MCF 10A (cell line): ENCODE measurements at regions of chr12 and their contacts with region 1.

Region 1: GRCh38 chr12:104064031-104064822 is at the start of gene HCFC2:
- DNase-seq: peak; percentile 82
- H3K4me3 Mint-ChIP-seq: peak within 1 kb of the TSS; percentile 91
- H3K27ac Mint-ChIP-seq: peak within 1 kb of the TSS; percentile 75
- H3K4me1 Mint-ChIP-seq: peaks cover 15% of the 10 kb centered on the region
- H3K27me3 Mint-ChIP-seq: no peaks in the 10 kb centered on the region
- CTCF ChIP-seq: no peak
- total RNA-seq, gene HCFC2: 10.3 and 11.4 TPM in 2 replicates

Region 2: DNA sequence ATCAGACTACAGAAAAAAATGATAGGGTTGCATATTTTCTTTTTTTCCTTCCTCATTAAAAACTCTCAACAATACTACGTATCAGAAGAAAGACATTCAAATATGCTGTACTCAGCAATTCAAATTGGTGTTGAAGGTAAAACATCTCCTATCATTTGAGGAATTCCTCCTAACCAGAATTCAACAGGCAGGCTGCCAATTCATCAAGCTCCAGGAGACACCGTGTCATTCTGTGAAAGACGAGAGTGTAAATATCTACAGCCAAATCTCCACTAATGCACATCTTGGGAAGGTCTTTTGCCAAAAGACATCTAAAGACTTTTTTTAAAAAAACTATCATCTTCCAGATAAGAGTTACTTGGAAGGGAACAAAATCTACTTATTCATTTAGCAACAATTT is 249.8 kb before region 1 on chr12:
- CTCF ChIA-PET with region 1: no interaction called
- POLR2A ChIA-PET with region 1: no interaction called
- intact Hi-C with region 1: no loop called
- DNase-seq: no peak
- H3K4me3 Mint-ChIP-seq: no peak overlapping the region
- H3K27ac Mint-ChIP-seq: peak overlapping the region; percentile 73
- H3K4me1 Mint-ChIP-seq: no peaks in the 10 kb centered on the region
- H3K27me3 Mint-ChIP-seq: no peaks in the 10 kb centered on the region
- CTCF ChIP-seq: no peak

Region 3: GRCh38 chr12:103930034-103930786 is 134.0 kb before region 1 on chr12 and contains the start of gene HSP90B1:
- CTCF ChIA-PET with region 1: no interaction called
- POLR2A ChIA-PET with region 1: interaction called, 16 read pairs
- intact Hi-C with region 1: loop called (anchors 1 kb)
- DNase-seq: peak; percentile 100
- H3K4me3 Mint-ChIP-seq: peak within 1 kb of the TSS; percentile 75
- H3K27ac Mint-ChIP-seq: peak within 1 kb of the TSS; percentile 58
- H3K4me1 Mint-ChIP-seq: peaks cover 23% of the 10 kb centered on the region
- H3K27me3 Mint-ChIP-seq: no peaks in the 10 kb centered on the region
- CTCF ChIP-seq: no peak
- total RNA-seq, gene HSP90B1: 1,052 and 1,334 TPM in 2 replicates

Region 4: GRCh38 chr12:104011261-104011660 is 53.0 kb before region 1 on chr12:
- CTCF ChIA-PET with region 1: no interaction called
- POLR2A ChIA-PET with region 1: interaction called, 10 read pairs
- intact Hi-C with region 1: no loop called
- DNase-seq: peak; percentile 95
- H3K4me3 Mint-ChIP-seq: peak overlapping the region; percentile 9
- H3K27ac Mint-ChIP-seq: peak overlapping the region; percentile 85
- H3K4me1 Mint-ChIP-seq: peaks cover 25% of the 10 kb centered on the region
- H3K27me3 Mint-ChIP-seq: no peaks in the 10 kb centered on the region
- CTCF ChIP-seq: no peak

Region 5: GRCh38 chr12:104152685-104153241 is 88.5 kb after region 1 on chr12:
- CTCF ChIA-PET with region 1: no interaction called
- POLR2A ChIA-PET with region 1: no interaction called
- intact Hi-C with region 1: no loop called
- DNase-seq: no peak
- H3K4me3 Mint-ChIP-seq: no peak overlapping the region
- H3K27ac Mint-ChIP-seq: no peak overlapping the region
- H3K4me1 Mint-ChIP-seq: no peaks in the 10 kb centered on the region
- H3K27me3 Mint-ChIP-seq: no peaks in the 10 kb centered on the region
- CTCF ChIP-seq: no peak